ENCODE measurements at regions of chr17 and their contacts with region 1.

Region 1: DNA sequence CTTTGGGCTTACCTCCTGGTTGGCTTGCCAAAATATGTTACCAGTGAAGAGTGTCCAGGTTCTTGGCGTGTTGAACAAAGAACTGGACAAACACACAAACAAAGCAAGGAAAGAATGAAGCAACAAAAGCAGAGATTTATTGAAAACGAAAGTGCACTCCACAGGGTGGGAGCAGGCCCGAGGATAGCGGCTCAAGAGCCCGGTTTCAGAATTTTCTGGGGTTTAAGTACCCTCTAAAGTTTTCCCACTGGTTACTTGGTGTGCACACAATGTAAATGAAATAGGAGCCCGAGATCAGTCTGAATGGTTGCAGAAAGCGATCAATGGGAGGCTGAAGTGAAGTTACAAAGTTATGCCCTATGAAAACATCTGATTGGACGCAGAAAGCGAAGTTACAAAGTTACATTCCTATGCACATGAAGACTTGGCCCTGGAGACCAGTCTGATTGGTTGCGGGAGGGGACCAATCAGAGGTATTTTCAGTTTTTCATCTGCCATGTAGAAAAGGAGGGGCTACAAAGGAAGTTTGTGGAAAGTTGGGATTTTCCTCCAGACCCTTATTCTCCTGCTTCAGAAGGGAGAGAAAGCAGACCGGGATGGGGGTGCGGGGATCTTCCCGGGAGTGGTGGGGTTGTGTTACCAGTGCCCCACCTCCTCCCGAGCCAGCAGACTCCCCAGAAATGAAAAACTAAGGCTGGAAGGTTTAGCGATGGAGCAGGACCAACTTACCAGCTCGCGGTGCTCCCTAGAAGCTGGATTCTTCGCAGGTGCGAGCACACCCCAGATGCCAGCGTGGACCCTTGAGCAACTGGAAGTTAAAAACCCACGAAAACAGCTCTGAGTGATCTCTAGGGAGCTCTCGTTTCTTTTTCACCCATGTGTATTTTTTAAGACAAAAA is at the start of gene SLFN12:
- DNase-seq: peak; percentile 96
- H3K4me3 ChIP-seq: peak within 1 kb of the TSS; percentile 55 to 92 (median 82)
- H3K27ac ChIP-seq: peak within 1 kb of the TSS; percentile 96
- H3K4me1 ChIP-seq: peaks cover 23% of the 10 kb centered on the region
- H3K27me3 ChIP-seq: no peaks in the 10 kb centered on the region
- CTCF ChIP-seq: no peak
- POLR2A ChIP-seq: peak; percentile 92
- total RNA-seq, gene SLFN12: 29.9 and 42.6 TPM in 2 replicates

Region 2: DNA sequence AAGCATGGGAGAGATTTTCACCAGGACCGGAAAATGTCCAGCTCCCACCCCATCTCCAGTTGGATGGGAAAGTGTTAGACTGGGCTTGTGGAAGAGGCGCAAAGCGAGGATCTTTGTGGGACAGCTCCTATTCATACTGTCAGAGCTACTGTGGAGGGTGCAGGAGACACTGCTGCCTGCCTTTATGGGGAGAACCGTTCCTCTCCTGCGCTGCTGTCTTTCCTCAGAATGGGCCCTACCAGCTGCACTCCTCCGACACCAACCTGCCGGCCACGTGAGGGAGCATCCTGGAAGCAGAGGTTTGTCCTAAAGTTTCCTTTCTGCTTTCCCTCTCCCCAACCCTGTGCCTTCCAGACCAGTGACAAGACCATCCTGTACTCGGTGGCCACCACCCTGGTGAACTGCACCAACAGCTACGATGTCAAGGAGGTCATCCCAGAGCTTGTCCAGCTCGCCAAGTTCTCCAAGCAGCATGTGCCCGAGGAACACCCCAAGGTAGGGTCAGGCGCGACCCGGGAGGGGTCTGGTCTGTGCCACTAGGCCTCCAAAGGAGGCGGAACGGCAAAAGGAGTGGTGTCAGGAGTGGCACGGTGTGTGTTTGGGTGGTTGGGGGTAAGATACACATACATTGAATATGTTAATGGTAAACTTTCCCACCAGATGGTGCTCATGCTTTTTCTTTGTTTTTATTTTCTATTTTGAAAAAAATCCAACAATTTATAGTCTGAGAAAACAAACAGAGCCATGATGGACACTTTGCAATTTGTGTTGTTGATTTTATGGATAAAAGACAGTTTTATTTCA is 261.3 kb before region 1 on chr17:
- CTCF ChIA-PET with region 1: no interaction called
- POLR2A ChIA-PET with region 1: no interaction called
- dilution Hi-C with region 1: no loop called
- intact Hi-C with region 1: loop called (anchors 10 kb)
- DNase-seq: peak; percentile 53
- H3K4me3 ChIP-seq: no peak overlapping the region
- H3K27ac ChIP-seq: no peak overlapping the region
- H3K4me1 ChIP-seq: no peaks in the 10 kb centered on the region
- H3K27me3 ChIP-seq: peaks cover 0 to 3% of the 10 kb centered on the region in 2 experiments
- CTCF ChIP-seq: no peak
- POLR2A ChIP-seq: no peak

Region 3: DNA sequence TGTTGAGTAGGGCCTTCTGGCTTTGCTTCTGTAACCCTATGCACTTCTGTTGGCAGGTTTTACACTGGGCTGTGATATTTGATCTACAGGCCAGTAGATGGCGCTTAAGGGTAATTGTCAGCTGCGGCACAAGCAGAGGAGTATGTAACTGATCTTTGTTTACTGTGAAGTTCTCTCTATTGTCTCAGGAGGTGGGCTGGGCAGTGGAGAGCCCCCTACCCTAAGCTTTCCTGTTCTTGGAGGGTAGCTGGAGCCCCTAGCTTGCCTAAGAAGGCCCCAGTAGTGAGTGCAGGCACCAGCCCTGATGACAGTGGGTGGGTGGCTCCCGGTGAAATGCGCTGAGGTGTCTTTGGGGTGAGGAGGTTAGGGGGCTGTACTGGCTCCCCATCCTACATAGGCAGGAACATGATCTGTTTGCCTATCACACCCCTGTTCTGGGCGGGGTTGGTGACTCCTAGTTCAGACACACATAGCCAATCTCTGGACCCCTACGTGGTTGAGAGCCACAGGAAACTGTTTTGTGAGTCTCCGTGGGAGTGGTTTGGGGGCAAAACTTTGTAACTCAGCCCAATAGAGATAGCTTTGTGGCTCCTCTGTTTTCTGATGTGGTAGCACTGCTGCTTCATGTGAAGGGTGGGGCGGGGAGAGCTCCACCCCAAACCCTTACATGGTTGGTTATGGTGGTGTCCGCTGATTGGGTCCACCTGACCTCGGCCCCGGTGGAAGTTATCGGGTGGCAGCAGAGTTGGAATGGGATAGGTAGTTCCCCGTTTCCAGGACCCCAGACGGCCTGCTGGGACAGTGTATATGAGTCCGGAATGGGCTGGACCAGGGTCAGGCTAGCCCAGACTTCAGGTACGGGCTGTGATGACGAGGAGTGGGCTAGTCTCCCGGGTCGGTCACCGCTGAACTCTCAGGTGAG is 119.4 kb before region 1 on chr17:
- CTCF ChIA-PET with region 1: interaction called, 3 read pairs
- POLR2A ChIA-PET with region 1: no interaction called
- dilution Hi-C with region 1: no loop called
- intact Hi-C with region 1: loop called (anchors 2 kb)
- DNase-seq: peak; percentile 71
- H3K4me3 ChIP-seq: no peak overlapping the region
- H3K27ac ChIP-seq: no peak overlapping the region
- H3K4me1 ChIP-seq: peaks cover 3% of the 10 kb centered on the region
- H3K27me3 ChIP-seq: no peaks in the 10 kb centered on the region
- CTCF ChIP-seq: peak; percentile 67
- POLR2A ChIP-seq: no peak

Region 4: DNA sequence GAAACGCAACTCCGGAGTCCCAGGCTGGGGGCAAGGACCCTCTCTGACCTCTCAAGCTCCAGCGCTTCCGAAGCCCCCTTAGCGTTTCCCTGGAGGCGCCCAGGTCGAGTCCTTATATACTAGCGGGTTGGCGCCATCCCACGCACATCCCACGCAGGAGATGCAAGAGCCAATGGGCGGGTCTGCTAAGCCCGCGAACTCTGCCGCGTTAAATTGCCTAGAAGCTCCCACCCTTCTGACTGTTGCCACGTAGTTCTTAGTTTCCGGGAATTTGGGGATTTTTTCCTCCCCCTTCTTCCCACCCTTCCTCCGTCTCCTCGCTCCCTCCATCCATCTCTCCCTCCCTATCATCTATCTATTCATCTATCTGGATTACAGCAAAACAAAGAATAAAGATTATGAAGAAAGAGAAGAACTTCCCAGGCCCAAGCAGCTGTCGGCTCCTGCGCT is 58.9 kb before region 1 on chr17 and contains the start of gene SLFN11:
- CTCF ChIA-PET with region 1: interaction called, 5 read pairs
- POLR2A ChIA-PET with region 1: interaction called, 12 read pairs
- dilution Hi-C with region 1: no loop called
- intact Hi-C with region 1: loop called (anchors 1 kb)
- DNase-seq: peak; percentile 92
- H3K4me3 ChIP-seq: peak within 1 kb of the TSS; percentile 88 to 96 (median 90)
- H3K27ac ChIP-seq: peak within 1 kb of the TSS; percentile 98
- H3K4me1 ChIP-seq: peaks cover 21% of the 10 kb centered on the region
- H3K27me3 ChIP-seq: no peaks in the 10 kb centered on the region
- CTCF ChIP-seq: no peak
- POLR2A ChIP-seq: peak; percentile 97
- total RNA-seq, gene SLFN11: 95.0 and 110 TPM in 2 replicates

Region 5: GRCh38 chr17:35486920-35487732 is 54.7 kb after region 1 on chr17:
- CTCF ChIA-PET with region 1: no interaction called
- POLR2A ChIA-PET with region 1: no interaction called
- dilution Hi-C with region 1: no loop called
- intact Hi-C with region 1: loop called (anchors 1 kb)
- DNase-seq: peak; percentile 11
- H3K4me3 ChIP-seq: peak overlapping the region in 2 of 3 experiments; percentile 17 to 37
- H3K27ac ChIP-seq: no peak overlapping the region
- H3K4me1 ChIP-seq: peaks cover 5% of the 10 kb centered on the region
- H3K27me3 ChIP-seq: peaks cover 77 to 83% of the 10 kb centered on the region in 2 experiments
- CTCF ChIP-seq: no peak
- POLR2A ChIP-seq: no peak

Region 6: GRCh38 chr17:35587074-35587971 is 154.9 kb after region 1 on chr17 and contains the start of gene AP2B1:
- CTCF ChIA-PET with region 1: no interaction called
- POLR2A ChIA-PET with region 1: no interaction called
- dilution Hi-C with region 1: no loop called
- intact Hi-C with region 1: loop called (anchors 2 kb)
- DNase-seq: peak; percentile 99
- H3K4me3 ChIP-seq: peak within 1 kb of the TSS; percentile 54 to 84 (median 70)
- H3K27ac ChIP-seq: peak within 1 kb of the TSS; percentile 91
- H3K4me1 ChIP-seq: peaks cover 19% of the 10 kb centered on the region
- H3K27me3 ChIP-seq: peaks cover 4 to 6% of the 10 kb centered on the region in 2 experiments
- CTCF ChIP-seq: no peak
- POLR2A ChIP-seq: peak; percentile 81
- total RNA-seq, gene AP2B1: 198 and 200 TPM in 2 replicates

Measured in endothelial cell of umbilical vein (primary cell).